Vagina (tissue), 2 donors: ENCODE measurements at regions of chr6 and their contacts with region 1.

Region 1: GRCh38 chr6:42879372-42880239 is at the start of gene RPL7L1:
- DNase-seq: peak in 1 of 2 donors; percentile 92
- H3K4me3 ChIP-seq: peak within 1 kb of the TSS; percentile 69 to 78
- H3K27ac ChIP-seq: peak within 1 kb of the TSS; percentile 92
- H3K4me1 ChIP-seq: peaks cover 29% of the 10 kb centered on the region
- H3K27me3 ChIP-seq: no peaks in the 10 kb centered on the region
- CTCF ChIP-seq: peak in 2 of 3 experiments; percentile 45 to 47
- POLR2A ChIP-seq: peak in 1 of 2 donors; percentile 58
- total RNA-seq, gene RPL7L1: 55.7 TPM

Region 2: DNA sequence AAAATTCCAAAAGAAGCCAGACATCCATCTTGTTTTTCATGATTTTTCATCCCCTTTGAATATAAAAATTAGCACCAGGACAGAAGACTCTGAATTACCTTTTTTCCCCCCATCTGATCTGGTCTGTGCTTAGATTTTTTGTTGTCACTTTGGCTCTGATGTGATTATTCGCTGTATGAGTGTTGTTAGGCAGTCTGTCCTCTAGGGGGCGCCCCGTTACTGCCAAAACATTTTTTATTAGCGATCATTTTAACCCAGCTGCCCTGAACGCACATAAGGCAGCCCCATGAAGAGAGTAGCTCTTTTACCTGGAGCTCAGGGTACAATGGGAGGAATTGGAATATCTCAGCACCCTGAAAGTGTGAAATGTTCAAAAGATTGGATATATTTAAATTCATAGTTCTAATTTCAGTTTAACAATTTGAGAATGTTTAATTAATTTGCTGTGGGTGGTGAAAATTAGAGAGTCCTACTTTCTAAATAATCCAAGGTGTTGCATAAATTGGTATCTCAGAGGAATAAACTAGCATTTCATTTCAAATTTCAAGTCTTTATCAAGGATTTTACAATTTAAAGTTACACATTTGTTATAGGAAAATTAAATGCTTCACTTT is 218.0 kb before region 1 on chr6:
- intact Hi-C with region 1: loop called (anchors 5 kb)
- DNase-seq: no peak
- H3K4me3 ChIP-seq: no peak overlapping the region
- H3K27ac ChIP-seq: no peak overlapping the region
- H3K4me1 ChIP-seq: no peaks in the 10 kb centered on the region
- H3K27me3 ChIP-seq: no peaks in the 10 kb centered on the region
- CTCF ChIP-seq: peak; percentile 80 to 96 (median 91)
- POLR2A ChIP-seq: no peak

Region 3: DNA sequence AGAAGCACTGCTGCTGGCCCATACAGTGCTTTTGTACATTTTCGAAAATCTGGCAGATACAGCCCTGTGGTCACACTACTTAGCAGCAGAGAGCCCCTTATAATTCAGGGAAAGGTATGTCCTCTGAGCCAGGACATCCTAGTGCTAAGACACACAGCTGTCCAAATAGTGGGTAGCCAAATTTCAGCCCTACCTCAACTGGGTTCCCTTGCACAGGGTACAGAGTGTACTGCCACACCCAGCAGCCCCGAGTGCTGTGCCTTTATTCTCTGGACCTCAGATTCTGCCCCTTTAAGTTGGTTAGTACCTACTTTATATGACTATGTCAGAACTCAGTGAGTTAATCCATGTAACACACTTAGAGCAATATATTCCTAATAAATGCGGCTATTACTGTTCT is 204.8 kb before region 1 on chr6:
- intact Hi-C with region 1: loop called (anchors 2 kb)
- DNase-seq: no peak
- H3K4me3 ChIP-seq: no peak overlapping the region
- H3K27ac ChIP-seq: no peak overlapping the region
- H3K4me1 ChIP-seq: no peaks in the 10 kb centered on the region
- H3K27me3 ChIP-seq: no peaks in the 10 kb centered on the region
- CTCF ChIP-seq: no peak
- POLR2A ChIP-seq: no peak

Region 4: DNA sequence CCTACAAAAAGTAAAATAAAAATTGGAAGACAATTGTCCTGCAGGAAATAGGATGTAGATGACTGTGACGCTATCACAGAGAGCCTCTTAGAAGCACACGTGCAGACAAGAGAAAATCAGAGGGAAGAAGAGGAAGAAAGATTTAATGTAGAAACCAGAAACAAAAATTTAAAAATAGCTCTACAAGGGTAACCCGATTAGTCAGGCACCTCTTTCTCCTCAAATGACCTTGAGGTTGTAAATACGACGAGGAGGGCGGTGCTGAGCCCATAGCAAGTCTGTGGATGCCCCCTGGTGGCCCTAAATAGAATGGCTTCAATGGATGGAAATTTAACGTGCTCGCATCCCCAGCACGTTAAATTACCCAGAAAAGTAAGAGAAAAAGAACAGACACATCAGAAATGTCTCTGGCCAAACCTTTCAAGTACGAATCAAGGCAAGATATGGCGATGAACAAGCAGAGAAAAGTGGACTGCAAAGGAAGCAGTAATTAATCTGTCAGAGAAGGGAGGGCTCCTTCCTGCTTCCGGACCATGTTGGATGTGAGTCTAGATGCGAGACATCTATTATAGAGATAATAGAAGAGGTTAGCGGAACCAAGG is 153.0 kb before region 1 on chr6:
- intact Hi-C with region 1: loop called (anchors 10 kb)
- DNase-seq: no peak
- H3K4me3 ChIP-seq: peak overlapping the region; percentile 50 to 62
- H3K27ac ChIP-seq: peak overlapping the region; percentile 87
- H3K4me1 ChIP-seq: peaks cover 17% of the 10 kb centered on the region
- H3K27me3 ChIP-seq: no peaks in the 10 kb centered on the region
- CTCF ChIP-seq: peak; percentile 84 to 94 (median 93)
- POLR2A ChIP-seq: no peak

Region 5: GRCh38 chr6:42782622-42783176 is 96.9 kb before region 1 on chr6:
- intact Hi-C with region 1: loop called (anchors 5 kb)
- DNase-seq: no peak
- H3K4me3 ChIP-seq: peak overlapping the region; percentile 72 to 96
- H3K27ac ChIP-seq: peak overlapping the region; percentile 100
- H3K4me1 ChIP-seq: peaks cover 41% of the 10 kb centered on the region
- H3K27me3 ChIP-seq: no peaks in the 10 kb centered on the region
- CTCF ChIP-seq: no peak
- POLR2A ChIP-seq: peak in 1 of 2 donors; percentile 39